HCT116 (cell line): ENCODE measurements at regions of chr6 and their contacts with region 1.

Region 1: GRCh38 chr6:43506667-43507471 is 3.3 kb downstream of the LRRC73 start:
- DNase-seq: peak; percentile 75
- ATAC-seq: peak; percentile 73
- H3K4me3 ChIP-seq: no peak overlapping the region
- H3K27ac ChIP-seq: no peak overlapping the region
- H3K4me1 ChIP-seq: peaks cover 10 to 22% of the 10 kb centered on the region in 2 experiments; a peak in 3 of 4 replicates
- H3K27me3 ChIP-seq: no peaks in the 10 kb centered on the region
- CTCF ChIP-seq: peak; percentile 87 to 95 (median 94)
- POLR2A ChIP-seq: no peak
- RAD21 ChIP-seq: peak; percentile 91

Region 2: DNA sequence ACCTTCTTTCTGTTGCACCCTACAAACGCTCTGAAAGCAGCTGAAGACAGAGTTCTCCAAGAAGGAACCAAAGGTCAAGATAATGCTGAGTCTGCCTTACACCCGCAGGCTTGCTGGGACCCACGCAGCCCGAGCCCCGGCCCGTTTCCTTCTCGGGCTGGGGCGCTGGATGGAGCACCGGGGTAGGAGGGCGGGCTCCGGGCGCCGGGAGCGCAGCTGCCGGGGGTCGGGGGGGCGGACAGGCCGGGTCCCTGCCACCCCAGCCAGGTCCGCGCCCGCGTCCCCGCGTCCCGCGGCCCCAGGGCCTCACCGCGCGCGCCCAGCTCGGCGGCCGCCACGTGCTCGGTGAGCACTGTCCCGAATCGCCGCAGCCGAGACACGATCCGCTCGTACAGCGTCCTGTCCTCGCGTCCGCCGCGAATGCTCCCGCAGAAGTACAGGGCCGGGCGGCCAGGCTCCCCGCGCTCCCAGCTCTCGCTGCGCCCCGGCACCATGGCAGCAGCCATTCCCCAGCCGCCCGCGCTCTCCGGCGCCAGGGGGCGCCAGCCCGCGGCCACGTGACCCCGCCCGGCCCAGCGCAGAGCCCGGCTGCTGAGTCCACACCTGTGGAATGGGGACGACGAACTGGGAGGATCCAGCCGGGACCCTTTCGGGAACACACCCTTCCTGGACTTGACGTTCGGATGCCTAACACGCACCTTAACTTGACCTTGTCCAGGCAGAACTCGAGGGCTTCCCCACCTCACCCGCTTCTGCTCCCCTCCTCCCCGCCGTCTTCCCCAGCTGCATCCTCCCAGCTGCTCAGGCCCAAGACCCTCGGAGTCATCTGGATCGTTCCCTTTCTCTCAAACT is 277.7 kb before region 1 on chr6 and contains the start of gene DNPH1:
- CTCF ChIA-PET with region 1: interaction called, 4 read pairs
- POLR2A ChIA-PET with region 1: no interaction called
- RAD21 ChIA-PET with region 1: no interaction called
- intact Hi-C with region 1: loop called (anchors 2 kb)
- DNase-seq: peak; percentile 48
- ATAC-seq: peak; percentile 94
- H3K4me3 ChIP-seq: peak within 1 kb of the TSS; percentile 72 to 88
- H3K27ac ChIP-seq: peak within 1 kb of the TSS; percentile 89
- H3K4me1 ChIP-seq: peaks cover 4 to 19% of the 10 kb centered on the region in 2 experiments; a peak in 3 of 4 replicates
- H3K27me3 ChIP-seq: no peaks in the 10 kb centered on the region
- CTCF ChIP-seq: peak in 2 of 3 experiments; percentile 79 to 84; a peak in 4 of 6 replicates
- POLR2A ChIP-seq: no peak
- RAD21 ChIP-seq: peak; percentile 35; the same call in 1 of the 2 replicates
- total RNA-seq, gene DNPH1: 117 TPM

Region 3: GRCh38 chr6:43263314-43264178 is 243.3 kb before region 1 on chr6:
- CTCF ChIA-PET with region 1: interaction called, 9 read pairs
- POLR2A ChIA-PET with region 1: no interaction called
- RAD21 ChIA-PET with region 1: no interaction called
- intact Hi-C with region 1: loop called (anchors 1 kb)
- DNase-seq: peak; percentile 51
- ATAC-seq: peak; percentile 99
- H3K4me3 ChIP-seq: no peak overlapping the region
- H3K27ac ChIP-seq: no peak overlapping the region
- H3K4me1 ChIP-seq: no peaks in the 10 kb centered on the region
- H3K27me3 ChIP-seq: no peaks in the 10 kb centered on the region
- CTCF ChIP-seq: peak; percentile 86 to 91 (median 88)
- POLR2A ChIP-seq: no peak
- RAD21 ChIP-seq: peak; percentile 97

Region 4: DNA sequence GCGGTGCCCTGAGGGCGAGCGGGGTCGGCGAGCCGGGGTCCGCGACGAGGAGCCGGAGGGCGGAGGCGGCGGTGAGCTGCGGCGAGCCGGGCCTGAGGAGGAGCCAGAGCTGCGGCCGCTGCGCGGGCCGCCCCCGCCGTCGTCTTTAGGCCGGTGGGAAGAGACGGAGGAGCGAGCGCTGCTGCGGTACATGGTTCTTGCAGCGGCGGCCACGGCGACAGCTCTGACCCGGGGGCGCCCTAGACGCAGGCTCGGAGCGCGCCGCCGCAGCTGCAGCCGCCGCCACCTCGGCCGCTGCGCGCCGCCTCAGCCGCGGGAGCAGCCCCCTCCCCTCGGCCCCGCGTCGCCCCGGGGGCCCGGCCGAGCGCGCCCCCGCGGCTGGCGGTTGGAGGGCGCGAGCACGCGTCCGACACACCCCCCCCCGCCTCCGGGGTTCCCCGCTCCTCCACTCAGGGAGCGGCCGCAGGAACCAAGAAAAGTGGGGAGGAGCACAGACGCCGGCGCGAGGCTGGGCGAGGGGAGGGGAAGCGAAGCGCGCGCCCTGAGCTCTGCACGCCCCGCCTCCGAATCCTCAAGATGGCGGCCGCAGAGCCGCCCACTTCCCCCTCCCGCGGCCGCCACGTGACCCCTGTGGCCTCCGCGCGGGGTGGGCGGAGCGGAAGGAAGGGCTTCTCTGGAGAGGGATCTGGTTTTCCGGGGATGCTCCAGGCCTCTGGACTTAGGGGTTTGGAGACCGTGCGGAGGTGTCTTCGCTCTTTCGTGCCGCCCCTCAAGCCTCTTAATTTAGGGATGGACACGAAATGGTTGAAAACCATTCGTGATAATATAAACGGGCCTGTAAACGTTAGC is 137.5 kb before region 1 on chr6 and contains the start of gene ZNF318:
- CTCF ChIA-PET with region 1: no interaction called
- POLR2A ChIA-PET with region 1: no interaction called
- RAD21 ChIA-PET with region 1: no interaction called
- intact Hi-C with region 1: loop called (anchors 10 kb)
- DNase-seq: peak; percentile 90
- ATAC-seq: peak; percentile 98
- H3K4me3 ChIP-seq: peak within 1 kb of the TSS; percentile 73 to 74
- H3K27ac ChIP-seq: peak within 1 kb of the TSS; percentile 82
- H3K4me1 ChIP-seq: peaks cover 11 to 19% of the 10 kb centered on the region in 2 experiments
- H3K27me3 ChIP-seq: no peaks in the 10 kb centered on the region
- CTCF ChIP-seq: no peak
- POLR2A ChIP-seq: peak; percentile 64
- RAD21 ChIP-seq: no peak
- total RNA-seq, gene ZNF318: 15.2 TPM

Region 5: GRCh38 chr6:43454696-43455530 is 52.0 kb before region 1 on chr6:
- CTCF ChIA-PET with region 1: interaction called, 31 read pairs
- POLR2A ChIA-PET with region 1: no interaction called
- RAD21 ChIA-PET with region 1: interaction called in 1 of 2 experiments, 6 read pairs
- intact Hi-C with region 1: loop called (anchors 2 kb)
- DNase-seq: peak; percentile 60
- ATAC-seq: peak; percentile 76
- H3K4me3 ChIP-seq: peak overlapping the region; percentile 50 to 61
- H3K27ac ChIP-seq: no peak overlapping the region
- H3K4me1 ChIP-seq: peaks cover 8 to 39% of the 10 kb centered on the region in 2 experiments; a peak in 3 of 4 replicates
- H3K27me3 ChIP-seq: no peaks in the 10 kb centered on the region
- CTCF ChIP-seq: 0 out of 6 replicates have a peak, but pooled peaks of 1 of the 3 experiments have one; percentile 11
- POLR2A ChIP-seq: no peak
- RAD21 ChIP-seq: no peak

Region 6: GRCh38 chr6:43496370-43497128 is 10.3 kb before region 1 on chr6:
- CTCF ChIA-PET with region 1: interaction called, 25 read pairs
- POLR2A ChIA-PET with region 1: interaction called, 4 read pairs
- RAD21 ChIA-PET with region 1: interaction called in 1 of 2 experiments, 3 read pairs
- intact Hi-C with region 1: no loop called
- DNase-seq: no peak
- ATAC-seq: peak; percentile 79
- H3K4me3 ChIP-seq: peak overlapping the region; percentile 12 to 35; a peak in 3 of 4 replicates
- H3K27ac ChIP-seq: peak overlapping the region; percentile 57
- H3K4me1 ChIP-seq: peaks cover 27 to 49% of the 10 kb centered on the region in 2 experiments
- H3K27me3 ChIP-seq: no peaks in the 10 kb centered on the region
- CTCF ChIP-seq: peak; percentile 74 to 84 (median 83)
- POLR2A ChIP-seq: no peak
- RAD21 ChIP-seq: peak; percentile 89

Region 7: DNA sequence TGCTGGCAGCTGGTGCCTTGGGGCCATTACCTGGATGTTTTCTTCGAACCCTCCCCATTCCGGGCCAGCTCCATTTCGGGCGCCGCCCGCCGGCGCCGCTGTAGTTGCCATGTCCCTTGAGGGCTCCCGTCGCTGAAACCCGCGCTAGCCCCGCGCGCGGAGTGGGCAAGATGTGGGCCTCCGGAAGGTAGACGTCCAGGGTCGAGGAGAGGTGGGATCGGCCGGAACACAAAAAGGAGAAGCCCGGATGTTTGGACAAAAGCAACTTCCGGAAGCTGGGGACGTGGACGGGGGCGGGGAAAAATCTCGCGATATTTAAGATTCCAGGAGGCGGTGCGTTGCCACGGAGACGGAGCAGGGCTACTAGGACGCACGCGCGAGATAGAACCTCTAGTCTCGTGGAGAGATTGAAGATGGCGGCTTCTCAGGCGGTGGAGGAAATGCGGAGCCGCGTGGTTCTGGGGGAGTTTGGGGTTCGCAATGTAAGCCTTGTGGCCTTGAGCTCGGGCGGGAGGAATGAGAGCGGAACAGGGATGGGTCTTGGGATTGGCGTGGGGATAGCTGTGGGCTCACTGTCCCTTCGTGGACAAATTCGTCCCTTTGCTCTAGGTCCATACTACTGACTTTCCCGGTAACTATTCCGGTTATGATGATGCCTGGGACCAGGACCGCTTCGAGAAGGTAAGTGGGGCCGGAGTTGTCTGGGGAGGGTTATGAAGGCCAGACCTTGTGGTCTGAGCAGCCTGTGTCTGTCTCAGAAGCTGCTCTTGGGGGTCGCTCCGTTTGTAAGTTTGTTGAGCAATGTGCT is 10.0 kb after region 1 on chr6 and contains the starts of genes POLR1C and YIPF3:
- CTCF ChIA-PET with region 1: interaction called, 12 read pairs
- POLR2A ChIA-PET with region 1: interaction called, 3 read pairs
- RAD21 ChIA-PET with region 1: no interaction called
- intact Hi-C with region 1: no loop called
- DNase-seq: peak; percentile 98
- ATAC-seq: peak; percentile 89
- H3K4me3 ChIP-seq: peak within 1 kb of the TSS; percentile 92 to 100
- H3K27ac ChIP-seq: peak within 1 kb of the TSS; percentile 61
- H3K4me1 ChIP-seq: peaks cover 14 to 21% of the 10 kb centered on the region in 2 experiments; a peak in 3 of 4 replicates
- H3K27me3 ChIP-seq: no peaks in the 10 kb centered on the region
- CTCF ChIP-seq: no peak
- POLR2A ChIP-seq: peak; percentile 92
- RAD21 ChIP-seq: no peak
- total RNA-seq, gene POLR1C: 84.6 TPM
- total RNA-seq, gene YIPF3: 84.5 TPM

Region 8: DNA sequence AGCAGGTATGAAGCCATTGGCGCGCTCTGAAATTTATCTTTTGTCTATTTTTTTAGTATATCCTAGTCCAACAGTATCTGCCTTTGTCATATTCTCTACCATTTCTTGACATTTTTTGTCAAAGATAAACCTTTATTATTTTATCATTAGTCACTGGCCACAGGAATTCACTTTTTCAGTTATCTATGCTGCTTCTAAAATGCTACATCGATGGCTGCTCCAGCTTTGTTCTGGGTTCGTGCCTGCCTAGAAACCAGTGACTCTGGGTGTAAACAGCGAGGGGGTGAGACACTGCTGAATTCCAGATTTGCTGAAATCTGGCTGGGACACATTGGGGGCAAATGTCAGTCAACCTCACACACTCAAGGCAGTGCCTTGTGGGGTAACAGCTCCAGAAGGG is 1074.0 kb after region 1 on chr6:
- CTCF ChIA-PET with region 1: no interaction called
- POLR2A ChIA-PET with region 1: no interaction called
- RAD21 ChIA-PET with region 1: no interaction called
- intact Hi-C with region 1: no loop called
- DNase-seq: no peak
- ATAC-seq: no peak
- H3K4me3 ChIP-seq: no peak overlapping the region
- H3K27ac ChIP-seq: no peak overlapping the region
- H3K4me1 ChIP-seq: no peaks in the 10 kb centered on the region
- H3K27me3 ChIP-seq: peaks cover 5% of the 10 kb centered on the region; the same call in 1 of the 2 replicates
- CTCF ChIP-seq: no peak
- POLR2A ChIP-seq: no peak
- RAD21 ChIP-seq: no peak